ENCODE measurements at regions of chr21 and their contacts with region 1.

Region 1: GRCh38 chr21:33641336-33642026 is at the start of gene CRYZL1:
- DNase-seq: peak; percentile 99
- ATAC-seq: peak; percentile 82
- H3K4me3 ChIP-seq: peak within 1 kb of the TSS; percentile 96
- H3K27ac ChIP-seq: peak within 1 kb of the TSS; percentile 91
- H3K4me1 ChIP-seq: peaks cover 4% of the 10 kb centered on the region; the same call in 1 of the 2 replicates
- H3K27me3 ChIP-seq: no peaks in the 10 kb centered on the region
- CTCF ChIP-seq: no peak
- POLR2A ChIP-seq: peak; percentile 69
- RAD21 ChIP-seq: no peak; the same call in 1 of the 2 replicates
- total RNA-seq, gene CRYZL1: 19.9 and 23.1 TPM in 2 replicates

Region 2: GRCh38 chr21:33244082-33244778 is 397.3 kb before region 1 on chr21:
- CTCF ChIA-PET with region 1: no interaction called
- POLR2A ChIA-PET with region 1: no interaction called
- dilution Hi-C with region 1: no loop called
- in situ Hi-C with region 1: no loop called
- intact Hi-C with region 1: no loop called
- DNase-seq: no peak
- ATAC-seq: no peak
- H3K4me3 ChIP-seq: no peak overlapping the region
- H3K27ac ChIP-seq: no peak overlapping the region
- H3K4me1 ChIP-seq: no peaks in the 10 kb centered on the region
- H3K27me3 ChIP-seq: no peaks in the 10 kb centered on the region
- CTCF ChIP-seq: no peak
- POLR2A ChIP-seq: no peak
- RAD21 ChIP-seq: no peak

Region 3: GRCh38 chr21:33451634-33452071 is 189.8 kb before region 1 on chr21:
- CTCF ChIA-PET with region 1: no interaction called
- POLR2A ChIA-PET with region 1: no interaction called
- dilution Hi-C with region 1: no loop called
- in situ Hi-C with region 1: no loop called
- intact Hi-C with region 1: no loop called
- DNase-seq: peak; percentile 33
- ATAC-seq: peak; percentile 71
- H3K4me3 ChIP-seq: no peak overlapping the region
- H3K27ac ChIP-seq: no peak overlapping the region
- H3K4me1 ChIP-seq: peaks cover 3% of the 10 kb centered on the region
- H3K27me3 ChIP-seq: no peaks in the 10 kb centered on the region
- CTCF ChIP-seq: no peak
- POLR2A ChIP-seq: no peak
- RAD21 ChIP-seq: no peak

Region 4: GRCh38 chr21:33712022-33712803 is 70.7 kb after region 1 on chr21:
- CTCF ChIA-PET with region 1: no interaction called
- POLR2A ChIA-PET with region 1: no interaction called
- dilution Hi-C with region 1: no loop called
- in situ Hi-C with region 1: no loop called
- intact Hi-C with region 1: no loop called
- DNase-seq: no peak
- ATAC-seq: no peak
- H3K4me3 ChIP-seq: no peak overlapping the region
- H3K27ac ChIP-seq: no peak overlapping the region
- H3K4me1 ChIP-seq: peaks cover 2% of the 10 kb centered on the region
- H3K27me3 ChIP-seq: no peaks in the 10 kb centered on the region
- CTCF ChIP-seq: no peak
- POLR2A ChIP-seq: no peak
- RAD21 ChIP-seq: no peak

Region 5: GRCh38 chr21:33761441-33762036 is 120.1 kb after region 1 on chr21:
- CTCF ChIA-PET with region 1: interaction called, 4 read pairs
- POLR2A ChIA-PET with region 1: no interaction called
- dilution Hi-C with region 1: no loop called
- in situ Hi-C with region 1: no loop called
- intact Hi-C with region 1: loop called (anchors 1 kb)
- DNase-seq: peak; percentile 99
- ATAC-seq: peak; percentile 86
- H3K4me3 ChIP-seq: peak overlapping the region; percentile 3; the same call in 1 of the 2 replicates
- H3K27ac ChIP-seq: peak overlapping the region; percentile 78
- H3K4me1 ChIP-seq: peaks cover 9% of the 10 kb centered on the region
- H3K27me3 ChIP-seq: no peaks in the 10 kb centered on the region
- CTCF ChIP-seq: no peak
- POLR2A ChIP-seq: no peak
- RAD21 ChIP-seq: no peak

Region 6: GRCh38 chr21:33825915-33826314 is 184.4 kb after region 1 on chr21:
- CTCF ChIA-PET with region 1: no interaction called
- POLR2A ChIA-PET with region 1: no interaction called
- dilution Hi-C with region 1: no loop called
- in situ Hi-C with region 1: no loop called
- intact Hi-C with region 1: loop called (anchors 5 kb)
- DNase-seq: peak; percentile 65
- ATAC-seq: peak; percentile 95
- H3K4me3 ChIP-seq: no peak overlapping the region
- H3K27ac ChIP-seq: peak overlapping the region; percentile 46; the same call in 1 of the 2 replicates
- H3K4me1 ChIP-seq: peaks cover 12% of the 10 kb centered on the region
- H3K27me3 ChIP-seq: no peaks in the 10 kb centered on the region
- CTCF ChIP-seq: no peak
- POLR2A ChIP-seq: no peak
- RAD21 ChIP-seq: no peak

Region 7: DNA sequence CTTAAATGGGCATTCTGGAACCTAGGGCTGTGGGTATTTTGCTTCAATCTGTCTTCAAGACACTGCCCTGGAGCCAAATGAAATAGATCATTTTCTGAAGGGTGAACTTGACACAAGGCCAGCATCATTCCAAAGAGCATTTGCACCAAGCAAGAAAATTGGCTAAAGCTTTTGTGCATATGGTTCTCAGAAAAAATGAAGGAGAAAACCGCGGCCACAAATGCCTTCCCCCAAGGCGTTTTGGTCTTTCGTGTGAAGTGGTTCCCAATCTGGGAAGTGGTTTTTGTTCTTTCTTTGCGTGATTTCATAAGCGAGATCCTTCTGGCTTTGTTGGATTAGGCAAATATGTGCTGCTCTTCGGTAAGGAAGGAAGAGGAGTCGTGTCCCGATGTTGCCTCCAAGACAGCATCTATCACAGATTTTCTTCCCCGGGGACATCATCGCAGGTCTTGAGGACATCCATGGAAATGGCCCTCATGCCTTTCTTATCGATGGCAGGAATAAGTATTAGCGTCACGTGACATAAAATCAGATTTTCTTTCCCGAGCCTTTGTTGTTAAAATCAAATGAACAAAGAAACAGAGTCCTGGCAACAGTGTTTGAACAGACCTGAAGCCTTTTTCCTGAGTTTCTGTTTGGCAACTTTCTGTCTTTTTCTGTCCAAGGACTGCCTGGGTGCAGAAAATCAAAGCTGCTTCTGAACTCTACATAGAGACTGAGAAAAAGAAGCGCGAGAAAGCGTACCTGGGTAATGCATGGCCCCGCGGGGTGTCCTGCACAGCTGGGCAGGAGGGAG is 243.1 kb after region 1 on chr21:
- CTCF ChIA-PET with region 1: no interaction called
- POLR2A ChIA-PET with region 1: no interaction called
- dilution Hi-C with region 1: no loop called
- in situ Hi-C with region 1: loop called (anchors 10 kb)
- intact Hi-C with region 1: no loop called
- DNase-seq: no peak
- ATAC-seq: no peak
- H3K4me3 ChIP-seq: no peak overlapping the region
- H3K27ac ChIP-seq: no peak overlapping the region
- H3K4me1 ChIP-seq: no peaks in the 10 kb centered on the region
- H3K27me3 ChIP-seq: peaks cover 19% of the 10 kb centered on the region
- CTCF ChIP-seq: no peak
- POLR2A ChIP-seq: no peak
- RAD21 ChIP-seq: no peak

Region 8: GRCh38 chr21:33894736-33895288 is 253.3 kb after region 1 on chr21:
- CTCF ChIA-PET with region 1: interaction called, 6 read pairs
- POLR2A ChIA-PET with region 1: no interaction called
- dilution Hi-C with region 1: no loop called
- in situ Hi-C with region 1: no loop called
- intact Hi-C with region 1: loop called (anchors 1 kb)
- DNase-seq: peak; percentile 89
- ATAC-seq: peak; percentile 92
- H3K4me3 ChIP-seq: peak overlapping the region; percentile 22; the same call in 1 of the 2 replicates
- H3K27ac ChIP-seq: no peak overlapping the region
- H3K4me1 ChIP-seq: peaks cover 17% of the 10 kb centered on the region
- H3K27me3 ChIP-seq: no peaks in the 10 kb centered on the region
- CTCF ChIP-seq: peak; percentile 87
- POLR2A ChIP-seq: no peak
- RAD21 ChIP-seq: peak; percentile 90

Measured in IMR-90 (cell line).